Heart right ventricle (tissue), 16 donors: ENCODE measurements at regions of chr17 and their contacts with region 1.

Region 1: DNA sequence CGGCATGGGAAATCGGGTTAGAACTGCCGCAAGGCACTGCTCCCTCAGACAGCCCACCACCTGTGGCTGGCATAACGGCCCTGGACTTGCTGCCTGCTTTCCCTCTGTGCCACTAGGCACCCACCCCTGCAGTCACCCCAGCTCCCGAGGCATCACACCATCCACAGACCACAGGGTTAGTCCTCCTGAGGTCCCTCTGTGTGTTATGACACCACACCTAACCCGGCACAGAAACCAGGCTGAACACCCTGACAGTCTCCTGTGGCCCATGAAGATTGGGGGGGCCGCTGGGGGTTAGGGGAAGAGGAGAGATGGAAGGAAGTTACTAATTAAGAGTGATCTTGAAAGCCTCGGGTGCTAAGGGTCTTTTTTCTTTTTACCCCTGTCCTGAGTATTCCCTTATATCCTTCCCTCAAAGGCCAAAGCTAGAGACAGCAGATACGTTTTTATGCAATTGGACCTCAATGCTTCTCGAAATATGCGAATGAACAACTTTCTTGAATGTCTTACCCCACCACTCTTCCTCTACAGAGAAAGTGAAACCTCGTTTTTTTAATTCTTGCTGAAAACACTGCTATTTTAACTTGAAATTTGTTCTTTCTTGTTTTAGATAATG is 7.0 kb downstream of the CYTH1 start:
- DNase-seq: no peak
- ATAC-seq: peak in 7 of 8 donors; percentile 28 to 47 (median 38)
- H3K4me3 ChIP-seq: peak overlapping the region in 5 of 10 donors; percentile 2 to 31 (median 27)
- H3K27ac ChIP-seq: peak overlapping the region in 9 of 10 donors; percentile 17 to 98 (median 32)
- H3K4me1 ChIP-seq: peaks cover 4 to 93% (median 41%) of the 10 kb centered on the region in 9 donors
- H3K27me3 ChIP-seq: no peaks in the 10 kb centered on the region
- CTCF ChIP-seq: no peak

Region 2: GRCh38 chr17:78736526-78737079 is 38.5 kb before region 1 on chr17:
- intact Hi-C with region 1: loop called in 1 of 10 experiments (anchors 5 kb)
- DNase-seq: peak; percentile 77 to 79
- ATAC-seq: peak; percentile 81 to 91 (median 88)
- H3K4me3 ChIP-seq: peak overlapping the region; percentile 30 to 64 (median 54)
- H3K27ac ChIP-seq: peak overlapping the region; percentile 64 to 92 (median 83)
- H3K4me1 ChIP-seq: peaks cover 24 to 96% (median 86%) of the 10 kb centered on the region in 9 donors
- H3K27me3 ChIP-seq: no peaks in the 10 kb centered on the region
- CTCF ChIP-seq: peak in 5 of 9 donors; percentile 10 to 25 (median 19)

Region 3: DNA sequence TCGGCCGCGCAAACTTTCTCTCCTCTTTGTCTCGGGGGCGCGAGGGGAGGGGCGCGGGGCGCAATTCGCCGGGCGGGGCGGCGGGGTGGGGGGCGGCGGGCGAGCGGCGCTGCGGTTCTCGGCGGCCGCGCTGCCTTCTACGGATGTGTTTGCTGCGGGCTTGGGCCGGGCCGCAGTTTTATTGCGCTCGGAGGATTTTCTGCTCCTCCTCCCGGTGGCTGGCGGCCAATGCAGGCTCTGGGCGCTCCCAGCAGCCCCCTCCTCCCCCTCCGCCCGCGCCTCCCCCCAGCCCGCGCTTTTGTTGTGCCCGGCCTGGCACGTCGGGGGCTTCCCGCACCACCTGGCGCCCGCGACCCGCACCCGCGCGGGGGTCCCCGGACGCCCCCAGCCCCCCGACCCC is 150.2 kb after region 1 on chr17 and contains the start of gene TIMP2:
- intact Hi-C with region 1: no loop called
- DNase-seq: peak; percentile 90 to 92
- ATAC-seq: peak; percentile 58 to 89 (median 72)
- H3K4me3 ChIP-seq: peak within 1 kb of the TSS; percentile 64 to 86 (median 75)
- H3K27ac ChIP-seq: peak within 1 kb of the TSS; percentile 86 to 97 (median 94)
- H3K4me1 ChIP-seq: peaks cover 13 to 53% (median 40%) of the 10 kb centered on the region in 9 donors
- H3K27me3 ChIP-seq: no peaks in the 10 kb centered on the region
- CTCF ChIP-seq: peak in 7 of 9 donors; percentile 19 to 49 (median 32)
- total RNA-seq, gene TIMP2: 77.5 to 118 (median 99.3) TPM

Region 4: DNA sequence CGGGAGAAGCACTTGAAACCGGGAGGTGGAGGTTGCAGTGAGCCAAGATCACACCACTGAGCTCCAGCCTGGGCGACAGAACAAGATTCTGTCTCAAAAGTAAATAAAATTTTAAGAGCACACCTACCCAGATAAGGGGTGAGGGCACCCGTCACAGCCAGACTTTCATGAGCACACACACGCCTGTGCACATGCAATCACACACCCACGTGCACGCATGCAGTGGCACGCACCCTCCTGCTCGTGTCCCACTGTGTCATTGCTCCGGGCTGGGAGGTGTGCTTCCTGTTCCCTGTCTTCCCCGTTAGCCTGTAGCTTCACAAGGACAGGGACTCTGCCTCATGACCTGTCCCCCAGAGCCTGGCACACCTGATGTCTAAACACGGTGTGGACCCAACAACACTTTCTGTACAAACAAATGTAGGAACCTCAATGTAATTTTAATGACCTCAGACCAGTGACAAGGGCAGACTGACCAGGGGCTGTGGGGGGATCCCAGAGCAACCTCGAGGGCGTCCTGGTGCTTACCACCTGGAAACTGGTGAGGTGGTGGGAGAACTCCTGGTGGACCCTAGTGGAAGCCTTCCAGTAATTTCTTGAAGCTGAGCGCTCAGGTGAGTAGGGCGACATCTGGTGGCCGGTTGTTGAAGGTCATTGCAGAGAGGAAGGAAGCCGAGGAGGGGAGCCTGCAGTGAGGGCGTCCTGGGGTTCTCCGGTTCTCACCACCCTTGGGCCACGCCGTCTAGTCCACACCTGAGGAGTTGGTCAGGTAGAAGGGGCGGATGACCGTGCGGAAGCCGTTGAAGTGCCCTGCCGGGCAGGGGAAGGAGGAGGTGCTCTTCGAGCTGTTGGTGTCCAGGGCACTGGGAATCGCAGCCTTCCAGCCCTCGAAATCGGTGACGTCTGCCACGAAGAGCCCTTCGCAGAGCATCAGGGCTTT is 196.0 kb after region 1 on chr17:
- intact Hi-C with region 1: no loop called
- DNase-seq: peak; percentile 83 to 87
- ATAC-seq: peak; percentile 23 to 58 (median 46)
- H3K4me3 ChIP-seq: peak overlapping the region in 2 of 10 donors; percentile 6 to 19
- H3K27ac ChIP-seq: peak overlapping the region in 9 of 10 donors; percentile 23 to 68 (median 54)
- H3K4me1 ChIP-seq: peaks cover 3 to 52% (median 32%) of the 10 kb centered on the region in 9 donors
- H3K27me3 ChIP-seq: no peaks in the 10 kb centered on the region
- CTCF ChIP-seq: peak; percentile 82 to 94 (median 90)